Mammary epithelial cell (primary cell): ENCODE measurements at regions of chr17 and their contacts with region 1.

Region 1: GRCh38 chr17:48791128-48792032 is 25.6 kb downstream of the TTLL6 start:
- DNase-seq: peak; percentile 68
- H3K4me3 ChIP-seq: no peak overlapping the region
- H3K27ac ChIP-seq: no peak overlapping the region
- H3K4me1 ChIP-seq: no peaks in the 10 kb centered on the region
- H3K27me3 ChIP-seq: no peaks in the 10 kb centered on the region
- CTCF ChIP-seq: peak; percentile 72 to 82

Region 2: GRCh38 chr17:48678141-48678971 is 113.0 kb before region 1 on chr17:
- CTCF ChIA-PET with region 1: interaction called, 13 read pairs
- dilution Hi-C with region 1: no loop called
- in situ Hi-C with region 1: loop called (anchors 10 kb)
- intact Hi-C with region 1: loop called (anchors 1 kb)
- DNase-seq: peak; percentile 69
- H3K4me3 ChIP-seq: no peak overlapping the region
- H3K27ac ChIP-seq: no peak overlapping the region
- H3K4me1 ChIP-seq: peaks cover 10% of the 10 kb centered on the region
- H3K27me3 ChIP-seq: peaks cover 2% of the 10 kb centered on the region
- CTCF ChIP-seq: peak; percentile 78 to 96

Region 3: GRCh38 chr17:48724251-48725003 is 67.0 kb before region 1 on chr17:
- CTCF ChIA-PET with region 1: interaction called, 5 read pairs
- dilution Hi-C with region 1: no loop called
- in situ Hi-C with region 1: loop called in 1 of 2 experiments (anchors 10 kb)
- intact Hi-C with region 1: loop called (anchors 1 kb)
- DNase-seq: peak; percentile 51
- H3K4me3 ChIP-seq: no peak overlapping the region
- H3K27ac ChIP-seq: no peak overlapping the region
- H3K4me1 ChIP-seq: no peaks in the 10 kb centered on the region
- H3K27me3 ChIP-seq: peaks cover 83% of the 10 kb centered on the region
- CTCF ChIP-seq: peak; percentile 54 to 76

Region 4: DNA sequence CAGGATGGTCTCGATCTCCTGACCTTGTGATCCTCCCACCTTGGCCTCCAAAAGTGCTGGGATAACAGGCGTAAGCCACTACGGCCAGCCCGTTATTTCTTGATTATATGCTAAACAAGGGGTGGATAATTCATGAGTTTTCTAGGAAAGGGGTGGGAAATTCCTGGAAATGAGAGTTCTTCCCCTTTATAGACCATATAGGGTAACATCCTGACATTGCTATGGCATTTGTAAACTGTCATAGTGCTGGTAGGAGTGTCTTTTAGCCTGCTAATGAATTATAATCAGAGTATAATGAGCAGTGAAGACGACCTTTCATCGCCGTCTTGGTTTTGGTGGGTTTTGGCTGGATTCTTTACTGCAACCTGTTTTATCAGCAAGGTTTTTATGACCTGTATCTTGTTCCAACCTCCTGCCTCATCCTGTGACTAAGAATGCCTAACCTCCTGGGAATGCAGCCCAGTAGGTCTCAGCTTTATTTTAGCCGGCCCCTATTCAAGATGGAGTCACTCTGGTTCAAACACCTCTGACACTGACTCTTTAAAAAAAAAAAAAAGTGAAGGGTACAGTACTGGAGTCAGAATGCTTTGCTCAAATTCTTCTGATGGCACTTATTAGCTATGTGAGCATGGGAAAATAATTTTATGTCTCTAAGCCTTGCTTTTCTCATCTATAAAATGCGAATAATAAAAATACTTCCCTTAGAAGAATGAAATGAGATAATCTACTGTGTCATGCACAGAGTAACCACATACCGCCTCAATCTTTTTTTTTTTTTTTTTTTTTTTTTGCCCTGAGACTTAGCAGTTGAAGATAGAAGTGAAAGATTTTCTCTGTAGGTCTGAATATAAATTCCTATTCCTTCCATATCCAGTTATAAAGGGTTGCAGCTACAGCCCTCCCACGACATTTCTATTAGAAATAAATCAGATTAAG is 34.3 kb after region 1 on chr17:
- CTCF ChIA-PET with region 1: no interaction called
- dilution Hi-C with region 1: no loop called
- in situ Hi-C with region 1: no loop called
- intact Hi-C with region 1: no loop called
- DNase-seq: peak; percentile 61
- H3K4me3 ChIP-seq: no peak overlapping the region
- H3K27ac ChIP-seq: no peak overlapping the region
- H3K4me1 ChIP-seq: no peaks in the 10 kb centered on the region
- H3K27me3 ChIP-seq: no peaks in the 10 kb centered on the region
- CTCF ChIP-seq: no peak

Region 5: GRCh38 chr17:49162866-49163265 is 371.5 kb after region 1 on chr17:
- CTCF ChIA-PET with region 1: no interaction called
- dilution Hi-C with region 1: no loop called
- in situ Hi-C with region 1: no loop called
- intact Hi-C with region 1: no loop called
- DNase-seq: no peak
- H3K4me3 ChIP-seq: no peak overlapping the region
- H3K27ac ChIP-seq: no peak overlapping the region
- H3K4me1 ChIP-seq: no peaks in the 10 kb centered on the region
- H3K27me3 ChIP-seq: peaks cover under 1% of the 10 kb centered on the region
- CTCF ChIP-seq: no peak